Adrenal gland (tissue), 19 donors: ENCODE measurements at regions of chr17 and their contacts with region 1.

Region 1: DNA sequence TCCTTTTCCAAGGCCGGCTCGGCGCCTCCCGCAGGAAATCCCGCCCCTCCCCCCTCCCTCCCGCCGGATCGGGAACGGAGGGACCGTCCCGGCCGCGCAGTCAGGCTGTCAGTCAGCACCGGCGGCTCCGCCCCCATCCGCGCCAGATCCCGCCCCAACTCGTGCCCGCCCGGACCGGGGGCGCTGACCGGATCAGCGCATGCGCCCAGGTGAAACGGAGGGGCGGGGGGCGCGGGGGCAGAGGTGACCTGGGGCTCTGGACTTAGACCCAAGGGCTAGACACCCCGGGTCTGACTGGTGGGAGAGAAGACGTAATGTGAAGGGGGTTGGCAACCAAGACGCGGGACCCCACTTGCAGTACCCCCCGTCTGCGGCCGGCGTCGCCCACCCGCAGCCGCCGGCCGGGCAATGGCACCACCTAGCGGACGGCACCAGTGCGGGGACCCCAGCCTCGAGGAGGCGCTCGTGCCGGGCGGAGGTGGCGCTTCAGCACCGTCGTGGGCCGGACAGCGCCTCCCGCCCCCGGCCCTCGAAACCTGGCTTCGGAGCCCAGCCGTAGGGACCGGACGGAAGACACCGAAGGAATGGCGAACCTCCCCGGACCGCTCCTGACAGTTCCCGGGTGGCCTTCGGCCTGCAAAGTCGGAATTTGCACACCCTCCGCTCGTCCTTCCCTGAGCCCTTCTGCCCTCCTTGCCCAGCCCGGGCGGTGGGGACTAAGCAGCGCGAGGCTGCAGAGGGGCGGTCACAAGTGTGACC is at the start of gene CASKIN2:
- DNase-seq: peak; percentile 97 to 99 (median 98)
- H3K4me3 ChIP-seq: peak within 1 kb of the TSS; percentile 48 to 94 (median 61)
- H3K27ac ChIP-seq: peak within 1 kb of the TSS; percentile 6 to 93 (median 86)
- H3K4me1 ChIP-seq: peaks cover 26 to 49% of the 10 kb centered on the region in 2 donors
- H3K27me3 ChIP-seq: no peaks in the 10 kb centered on the region
- CTCF ChIP-seq: peak; percentile 91 to 99 (median 97)
- POLR2A ChIP-seq: no peak
- total RNA-seq, gene CASKIN2: 12.9 to 90.8 (median 35.6) TPM

Region 2: GRCh38 chr17:75319904-75320691 is 195.6 kb before region 1 on chr17:
- intact Hi-C with region 1: loop called in 1 of 2 experiments (anchors 10 kb)
- DNase-seq: no peak
- H3K4me3 ChIP-seq: no peak overlapping the region
- H3K27ac ChIP-seq: no peak overlapping the region
- H3K4me1 ChIP-seq: peaks cover 4 to 12% of the 10 kb centered on the region in 2 donors
- H3K27me3 ChIP-seq: no peaks in the 10 kb centered on the region
- CTCF ChIP-seq: no peak
- POLR2A ChIP-seq: no peak

Region 3: DNA sequence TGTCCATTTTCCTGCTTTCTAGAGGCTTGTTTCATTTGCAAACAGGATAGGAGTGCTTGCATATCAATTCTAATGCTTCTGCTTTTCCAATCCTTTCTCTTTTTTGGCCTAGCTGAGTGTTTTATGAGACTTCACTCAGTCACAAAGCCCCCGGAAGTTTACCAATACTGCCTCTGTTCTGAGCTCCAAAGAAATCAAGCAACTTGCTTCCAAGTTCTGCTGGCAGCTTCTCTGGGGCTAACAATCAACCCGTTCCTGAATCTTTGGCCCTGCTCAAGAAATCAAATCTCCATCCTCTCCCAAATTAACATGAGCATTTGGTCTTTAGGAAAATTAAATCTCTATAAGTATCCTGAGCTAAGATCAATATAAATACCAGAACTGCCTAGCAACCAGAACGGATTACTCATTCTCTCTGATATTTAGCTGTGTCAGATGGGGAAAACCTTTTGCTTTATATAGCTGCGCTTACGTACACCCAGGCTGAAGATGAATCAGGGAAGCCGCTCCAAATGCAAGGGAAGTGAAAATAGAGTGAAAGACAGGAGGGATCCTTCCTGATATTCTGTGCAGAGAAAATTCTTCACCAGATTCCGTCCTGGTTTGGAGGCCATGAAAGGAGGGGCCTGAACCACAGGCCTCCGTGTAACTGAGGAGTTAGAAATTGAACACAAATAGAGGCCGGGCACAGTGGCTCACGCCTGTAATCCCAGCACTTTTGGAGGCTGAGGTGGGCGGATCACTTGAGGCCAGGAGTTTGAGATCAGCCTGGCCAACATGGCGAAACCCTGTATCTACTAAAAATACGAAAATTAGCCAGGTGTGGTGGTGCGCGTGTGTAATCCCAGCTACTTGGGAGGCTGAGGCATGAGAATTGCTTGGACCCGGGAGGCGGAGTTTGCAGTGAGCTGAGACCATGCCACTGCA is 86.9 kb before region 1 on chr17:
- intact Hi-C with region 1: loop called (anchors 5 kb)
- DNase-seq: no peak
- H3K4me3 ChIP-seq: no peak overlapping the region
- H3K27ac ChIP-seq: peak overlapping the region in 3 of 5 donors; percentile 16 to 69 (median 37)
- H3K4me1 ChIP-seq: peaks cover 4 to 32% of the 10 kb centered on the region in 2 donors
- H3K27me3 ChIP-seq: no peaks in the 10 kb centered on the region
- CTCF ChIP-seq: no peak
- POLR2A ChIP-seq: no peak

Region 4: DNA sequence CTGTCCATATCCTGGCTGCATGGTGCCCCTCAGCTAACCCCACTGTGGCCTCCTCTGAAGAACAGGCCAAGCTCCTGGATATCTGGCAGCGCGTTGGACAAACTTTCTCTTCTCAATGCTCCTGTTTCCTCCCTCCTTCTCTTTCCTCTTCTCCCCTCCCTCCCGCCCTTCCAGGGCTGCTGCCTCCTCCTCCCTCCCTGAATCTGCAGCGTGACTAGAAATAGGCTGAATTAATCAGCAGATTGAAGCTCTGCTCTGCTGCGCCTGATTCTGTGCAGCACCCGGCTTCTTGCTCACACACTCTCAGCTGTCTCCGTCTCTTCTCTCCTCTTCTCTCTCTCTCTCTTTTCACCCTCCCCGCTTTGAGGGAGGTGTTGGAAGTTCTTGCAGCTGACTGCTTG is 39.4 kb before region 1 on chr17:
- intact Hi-C with region 1: loop called in 1 of 2 experiments (anchors 5 kb)
- DNase-seq: peak; percentile 58 to 85 (median 75)
- H3K4me3 ChIP-seq: peak overlapping the region in 1 of 4 donors; percentile 5
- H3K27ac ChIP-seq: peak overlapping the region in 4 of 5 donors; percentile 36 to 84 (median 68)
- H3K4me1 ChIP-seq: peaks cover 26 to 51% of the 10 kb centered on the region in 2 donors
- H3K27me3 ChIP-seq: no peaks in the 10 kb centered on the region
- CTCF ChIP-seq: no peak
- POLR2A ChIP-seq: no peak